Activated CD4-positive, alpha-beta memory T cell treated with anti-CD3 and anti-CD28 coated beads for 36 hours (primary cell): ENCODE measurements at regions of chr5 and their contacts with region 1.

Region 1: GRCh38 chr5:126499853-126500342 is 76.7 kb downstream of the GRAMD2B start:
- DNase-seq: peak; percentile 22
- H3K4me3 Mint-ChIP-seq: no peak overlapping the region
- H3K27ac Mint-ChIP-seq: no peak overlapping the region
- H3K4me1 Mint-ChIP-seq: peaks cover 8% of the 10 kb centered on the region
- H3K27me3 Mint-ChIP-seq: no peaks in the 10 kb centered on the region

Region 2: GRCh38 chr5:126348855-126349635 is 150.9 kb before region 1 on chr5:
- CTCF ChIA-PET with region 1: interaction called, 94 read pairs
- POLR2A ChIA-PET with region 1: no interaction called
- intact Hi-C with region 1: loop called (anchors 1 kb)
- DNase-seq: no peak
- H3K4me3 Mint-ChIP-seq: no peak overlapping the region
- H3K27ac Mint-ChIP-seq: no peak overlapping the region
- H3K4me1 Mint-ChIP-seq: peaks cover 2% of the 10 kb centered on the region
- H3K27me3 Mint-ChIP-seq: peaks cover 17% of the 10 kb centered on the region

Region 3: DNA sequence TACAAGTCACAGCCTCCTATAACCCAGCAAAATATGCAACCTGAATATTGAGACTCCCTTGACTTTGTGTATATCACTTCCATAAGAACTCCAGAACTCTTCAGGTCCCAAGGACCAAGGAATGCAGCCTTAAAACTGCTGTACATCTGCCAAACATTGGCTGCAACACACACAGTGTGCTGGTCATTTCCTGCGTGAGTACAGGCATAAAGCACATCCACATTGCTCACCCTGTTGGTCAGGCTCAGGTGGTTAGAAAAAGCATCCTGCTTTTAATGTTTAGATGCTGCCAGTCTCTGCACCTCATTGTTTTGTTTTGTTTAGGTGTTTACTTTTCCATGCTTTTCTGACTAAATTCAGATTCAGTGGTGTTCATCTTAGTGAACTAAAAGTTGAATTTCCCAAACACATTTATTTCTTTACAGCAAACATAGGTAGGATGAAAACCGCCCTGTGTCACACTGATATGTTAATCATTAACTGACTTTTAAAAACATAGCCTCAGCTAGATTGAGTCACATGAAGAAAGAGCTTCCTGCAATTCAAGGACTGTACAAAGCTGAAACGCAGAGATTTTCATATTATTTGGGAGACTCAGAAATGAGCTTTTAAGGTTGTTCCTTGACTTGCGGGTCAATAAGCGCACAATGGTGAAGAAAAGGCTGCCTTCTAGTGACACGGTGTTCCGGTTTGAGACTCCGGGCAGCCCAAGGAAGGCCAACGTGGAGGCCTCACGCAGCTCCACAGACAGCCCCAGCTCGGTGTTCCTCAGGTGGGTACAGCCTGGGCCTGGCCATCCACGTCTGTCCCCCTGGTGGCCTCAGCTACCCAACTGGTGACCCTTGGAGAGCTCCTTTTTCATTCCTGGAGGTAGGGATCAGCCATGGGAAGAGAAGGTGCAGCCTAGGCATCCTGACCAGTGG is 128.8 kb before region 1 on chr5:
- CTCF ChIA-PET with region 1: interaction called, 15 read pairs
- POLR2A ChIA-PET with region 1: no interaction called
- intact Hi-C with region 1: no loop called
- DNase-seq: no peak
- H3K4me3 Mint-ChIP-seq: no peak overlapping the region
- H3K27ac Mint-ChIP-seq: no peak overlapping the region
- H3K4me1 Mint-ChIP-seq: peaks cover 15% of the 10 kb centered on the region
- H3K27me3 Mint-ChIP-seq: no peaks in the 10 kb centered on the region

Region 4: DNA sequence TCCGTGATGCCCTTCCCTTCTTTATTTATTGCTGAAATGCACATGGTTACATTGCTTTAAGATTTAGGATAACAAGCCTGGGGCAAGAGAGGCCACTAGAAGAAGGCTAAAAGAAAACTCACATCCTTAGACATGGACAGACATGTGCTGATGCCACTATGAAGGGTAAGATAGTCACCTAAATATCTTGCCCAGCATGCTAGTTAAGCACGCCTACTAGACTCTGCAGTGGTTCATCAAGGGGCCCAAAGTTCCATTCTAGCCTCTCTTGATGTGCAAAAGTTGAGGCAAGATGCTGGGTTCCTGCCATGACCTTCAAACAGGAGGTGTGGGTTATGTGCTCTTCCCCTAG is 27.4 kb before region 1 on chr5:
- CTCF ChIA-PET with region 1: interaction called, 13 read pairs
- POLR2A ChIA-PET with region 1: no interaction called
- intact Hi-C with region 1: no loop called
- DNase-seq: no peak
- H3K4me3 Mint-ChIP-seq: no peak overlapping the region
- H3K27ac Mint-ChIP-seq: no peak overlapping the region
- H3K4me1 Mint-ChIP-seq: peaks cover 5% of the 10 kb centered on the region
- H3K27me3 Mint-ChIP-seq: no peaks in the 10 kb centered on the region

Region 5: DNA sequence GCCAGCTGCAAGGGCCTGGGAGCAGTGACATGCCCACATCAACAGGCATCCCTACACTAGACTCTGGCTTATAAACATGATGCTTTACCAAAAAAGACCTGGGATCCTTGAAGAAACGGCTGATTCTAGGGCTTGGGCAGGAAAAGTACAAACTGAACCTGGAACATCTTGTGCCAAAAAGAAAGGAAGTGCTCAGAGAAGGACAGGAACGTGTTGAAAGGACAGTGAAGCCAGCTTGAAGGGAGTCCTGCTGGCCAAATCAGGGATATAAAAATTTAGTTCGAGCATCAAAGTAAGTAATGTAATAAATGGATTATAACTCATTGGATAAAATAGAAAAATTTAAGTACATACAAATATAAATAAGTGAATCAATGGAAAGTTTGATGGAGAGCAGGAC is 37.0 kb after region 1 on chr5:
- CTCF ChIA-PET with region 1: interaction called, 12 read pairs
- POLR2A ChIA-PET with region 1: no interaction called
- intact Hi-C with region 1: loop called (anchors 5 kb)
- DNase-seq: no peak
- H3K4me3 Mint-ChIP-seq: no peak overlapping the region
- H3K27ac Mint-ChIP-seq: no peak overlapping the region
- H3K4me1 Mint-ChIP-seq: no peaks in the 10 kb centered on the region
- H3K27me3 Mint-ChIP-seq: no peaks in the 10 kb centered on the region

Region 6: DNA sequence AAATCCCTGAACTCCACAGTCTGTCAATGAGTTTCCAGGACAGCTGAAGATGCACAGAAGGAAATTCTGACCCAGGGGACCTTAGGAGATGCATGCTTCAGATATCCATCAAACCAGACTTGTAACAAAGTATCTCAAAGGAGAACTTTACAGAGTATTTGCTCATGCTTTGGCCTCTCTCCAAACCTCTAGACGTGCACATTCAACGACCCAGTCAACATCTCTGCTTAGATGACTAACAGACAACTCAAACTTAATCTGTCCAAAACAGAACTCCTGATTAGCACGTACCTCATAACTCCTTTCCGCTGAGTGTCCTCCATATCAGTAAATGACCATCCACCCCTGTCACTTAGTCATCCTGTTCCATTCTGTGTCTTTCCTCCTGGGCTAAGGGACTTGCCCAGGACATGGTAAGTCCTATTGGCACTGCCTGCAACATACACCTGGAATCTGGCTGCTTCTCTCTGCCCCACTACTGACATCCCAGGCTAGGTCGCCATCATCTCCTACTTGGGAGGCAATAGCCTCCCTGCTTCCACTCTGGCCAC is 384.4 kb after region 1 on chr5:
- CTCF ChIA-PET with region 1: no interaction called
- POLR2A ChIA-PET with region 1: no interaction called
- intact Hi-C with region 1: no loop called
- DNase-seq: no peak
- H3K4me3 Mint-ChIP-seq: no peak overlapping the region
- H3K27ac Mint-ChIP-seq: no peak overlapping the region
- H3K4me1 Mint-ChIP-seq: no peaks in the 10 kb centered on the region
- H3K27me3 Mint-ChIP-seq: no peaks in the 10 kb centered on the region